ENCODE measurements at regions of chr2 and their contacts with region 1.

Region 1: DNA sequence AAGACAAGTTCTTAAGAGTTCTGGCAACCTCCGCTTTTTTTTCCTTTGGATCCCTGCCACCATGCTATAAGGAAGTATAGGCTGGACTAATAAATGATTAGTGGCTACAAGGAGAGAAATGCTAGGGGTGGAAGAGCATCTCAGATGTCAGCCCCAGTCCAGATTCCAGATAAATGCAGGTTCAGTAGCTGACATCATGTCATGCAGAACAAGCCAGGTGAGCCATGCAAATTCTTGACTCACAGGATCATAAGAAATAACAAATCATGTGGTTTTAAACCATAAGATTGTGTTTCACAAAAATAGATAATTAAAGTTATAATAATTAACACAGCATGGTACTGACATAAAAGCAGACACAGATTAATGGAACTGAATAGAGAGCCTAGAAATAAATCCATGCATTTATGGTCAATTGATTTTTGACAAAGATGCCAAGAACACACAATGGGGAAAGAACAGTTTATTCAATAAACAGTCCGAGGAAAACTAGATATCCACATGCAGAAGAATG is 152.9 kb upstream of the SESTD1 start:
- DNase-seq: no peak
- ATAC-seq: no peak
- H3K4me3 ChIP-seq: no peak overlapping the region
- H3K27ac ChIP-seq: no peak overlapping the region
- H3K4me1 ChIP-seq: no peaks in the 10 kb centered on the region
- H3K27me3 ChIP-seq: no peaks in the 10 kb centered on the region
- CTCF ChIP-seq: no peak
- POLR2A ChIP-seq: no peak

Region 2: DNA sequence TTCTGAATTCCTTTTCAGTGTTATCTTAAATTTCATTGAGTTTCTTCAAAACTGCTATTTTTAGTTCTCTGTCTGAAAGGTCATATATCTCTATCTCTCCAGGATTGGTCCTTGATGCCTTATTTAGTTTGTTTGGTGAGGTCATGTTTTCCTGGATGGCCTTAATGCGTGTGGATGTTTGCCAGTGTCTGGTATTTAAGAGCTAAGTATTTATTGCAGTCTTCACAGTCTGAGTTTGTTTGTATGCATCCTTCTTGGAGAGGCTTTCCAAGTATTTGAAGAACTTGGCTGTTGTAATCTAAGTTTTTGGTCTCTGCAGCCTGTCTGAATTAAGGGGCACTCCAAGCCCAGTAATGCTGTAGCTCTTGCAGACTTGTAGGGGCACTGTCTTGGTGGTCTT is 194.6 kb after region 1 on chr2:
- intact Hi-C with region 1: no loop called
- DNase-seq: no peak
- ATAC-seq: no peak
- H3K4me3 ChIP-seq: no peak overlapping the region
- H3K27ac ChIP-seq: no peak overlapping the region
- H3K4me1 ChIP-seq: no peaks in the 10 kb centered on the region
- H3K27me3 ChIP-seq: no peaks in the 10 kb centered on the region
- CTCF ChIP-seq: no peak
- POLR2A ChIP-seq: no peak

Region 3: DNA sequence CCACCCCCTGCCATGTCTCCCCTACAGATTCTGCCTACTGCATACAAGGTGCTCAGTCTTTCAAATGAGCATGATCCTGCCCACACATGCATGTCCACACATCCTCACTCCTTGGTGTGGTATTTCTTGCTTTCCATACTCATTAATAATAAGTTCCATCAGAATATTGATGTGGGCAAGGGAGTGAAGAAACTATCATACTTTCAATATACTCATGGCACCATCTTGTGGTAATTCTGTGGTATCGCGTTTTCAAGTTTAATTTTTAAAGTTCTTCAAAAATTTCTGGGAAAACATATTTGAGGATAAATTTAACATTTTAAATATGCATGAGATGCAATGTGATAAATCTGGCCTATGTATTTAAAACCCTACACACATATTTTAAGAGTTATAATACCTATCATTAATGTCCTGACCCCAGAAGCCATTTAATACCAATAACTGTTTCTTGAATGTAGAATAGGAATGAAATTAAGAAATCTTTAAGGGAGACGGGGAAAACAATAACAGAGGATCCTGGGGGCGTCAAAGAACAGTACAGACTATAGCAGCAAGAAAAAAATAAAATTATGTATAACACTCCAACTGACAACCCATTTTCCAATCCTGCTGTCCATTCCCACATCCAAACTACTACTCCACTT is 333.8 kb after region 1 on chr2:
- intact Hi-C with region 1: loop called (anchors 5 kb)
- DNase-seq: no peak
- ATAC-seq: peak; percentile 48
- H3K4me3 ChIP-seq: no peak overlapping the region
- H3K27ac ChIP-seq: no peak overlapping the region
- H3K4me1 ChIP-seq: no peaks in the 10 kb centered on the region
- H3K27me3 ChIP-seq: no peaks in the 10 kb centered on the region
- CTCF ChIP-seq: peak; percentile 45 to 87 (median 74)
- POLR2A ChIP-seq: no peak

Region 4: GRCh38 chr2:180000434-180000833 is 582.9 kb after region 1 on chr2:
- intact Hi-C with region 1: no loop called
- DNase-seq: no peak
- ATAC-seq: no peak
- H3K4me3 ChIP-seq: no peak overlapping the region
- H3K27ac ChIP-seq: no peak overlapping the region
- H3K4me1 ChIP-seq: peaks cover 7% of the 10 kb centered on the region
- H3K27me3 ChIP-seq: no peaks in the 10 kb centered on the region
- CTCF ChIP-seq: no peak
- POLR2A ChIP-seq: no peak

Measured in body of pancreas (tissue), 4 donors.